Mammary epithelial cell (primary cell): ENCODE measurements at regions of chr10 and their contacts with region 1.

Region 1: DNA sequence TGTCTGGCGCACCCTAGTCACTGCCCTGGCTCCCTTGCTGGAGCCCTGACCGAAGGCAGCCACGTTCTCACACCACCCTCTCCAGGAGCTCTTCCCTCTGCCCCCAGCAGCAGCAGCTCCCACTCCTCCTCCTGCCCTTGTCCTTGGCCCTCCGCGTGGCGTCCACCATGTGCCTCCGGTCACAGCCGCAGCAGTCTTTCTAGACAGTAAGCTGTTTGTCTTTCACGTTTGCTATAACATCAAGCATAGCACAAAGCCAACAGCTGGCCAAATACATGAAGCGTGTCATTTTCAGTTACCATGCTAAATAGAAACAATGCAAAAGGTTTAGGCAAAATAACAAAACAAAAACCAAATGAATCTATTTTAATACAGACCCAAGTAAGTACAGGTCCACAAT is 3.3 kb downstream of the PITRM1 start:
- DNase-seq: no peak
- H3K4me3 ChIP-seq: no peak overlapping the region
- H3K27ac ChIP-seq: no peak overlapping the region
- H3K4me1 ChIP-seq: peaks cover 12% of the 10 kb centered on the region
- H3K27me3 ChIP-seq: no peaks in the 10 kb centered on the region
- CTCF ChIP-seq: no peak

Region 2: GRCh38 chr10:3131094-3131493 is 38.2 kb before region 1 on chr10:
- CTCF ChIA-PET with region 1: no interaction called
- dilution Hi-C with region 1: loop called (anchors 5 kb)
- in situ Hi-C with region 1: no loop called
- intact Hi-C with region 1: no loop called
- DNase-seq: peak; percentile 60
- H3K4me3 ChIP-seq: no peak overlapping the region
- H3K27ac ChIP-seq: no peak overlapping the region
- H3K4me1 ChIP-seq: peaks cover 11% of the 10 kb centered on the region
- H3K27me3 ChIP-seq: no peaks in the 10 kb centered on the region
- CTCF ChIP-seq: no peak

Region 3: DNA sequence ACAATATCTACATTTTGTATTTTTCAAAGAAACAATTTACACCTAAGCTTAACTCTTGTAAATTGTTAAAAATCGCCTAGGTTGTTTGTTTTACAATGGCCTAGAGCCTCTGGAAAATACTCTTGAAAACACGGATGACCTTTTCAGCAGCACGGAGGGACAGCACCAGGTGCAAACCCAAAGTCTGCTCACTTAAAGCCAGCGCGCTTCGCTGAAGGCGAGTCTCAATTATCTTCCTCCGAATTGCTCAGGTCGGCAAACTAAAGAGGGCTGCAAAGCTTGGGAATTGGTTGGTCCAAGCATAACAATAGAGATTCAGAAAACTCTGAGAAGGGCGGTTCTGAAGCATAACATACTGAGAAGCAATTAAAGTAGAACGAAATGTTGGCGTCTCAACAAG is 143.1 kb after region 1 on chr10:
- CTCF ChIA-PET with region 1: no interaction called
- dilution Hi-C with region 1: no loop called
- in situ Hi-C with region 1: no loop called
- intact Hi-C with region 1: no loop called
- DNase-seq: no peak
- H3K4me3 ChIP-seq: no peak overlapping the region
- H3K27ac ChIP-seq: no peak overlapping the region
- H3K4me1 ChIP-seq: no peaks in the 10 kb centered on the region
- H3K27me3 ChIP-seq: no peaks in the 10 kb centered on the region
- CTCF ChIP-seq: no peak